A673 (cell line): ENCODE measurements at regions of chr15 and their contacts with region 1.

Region 1: DNA sequence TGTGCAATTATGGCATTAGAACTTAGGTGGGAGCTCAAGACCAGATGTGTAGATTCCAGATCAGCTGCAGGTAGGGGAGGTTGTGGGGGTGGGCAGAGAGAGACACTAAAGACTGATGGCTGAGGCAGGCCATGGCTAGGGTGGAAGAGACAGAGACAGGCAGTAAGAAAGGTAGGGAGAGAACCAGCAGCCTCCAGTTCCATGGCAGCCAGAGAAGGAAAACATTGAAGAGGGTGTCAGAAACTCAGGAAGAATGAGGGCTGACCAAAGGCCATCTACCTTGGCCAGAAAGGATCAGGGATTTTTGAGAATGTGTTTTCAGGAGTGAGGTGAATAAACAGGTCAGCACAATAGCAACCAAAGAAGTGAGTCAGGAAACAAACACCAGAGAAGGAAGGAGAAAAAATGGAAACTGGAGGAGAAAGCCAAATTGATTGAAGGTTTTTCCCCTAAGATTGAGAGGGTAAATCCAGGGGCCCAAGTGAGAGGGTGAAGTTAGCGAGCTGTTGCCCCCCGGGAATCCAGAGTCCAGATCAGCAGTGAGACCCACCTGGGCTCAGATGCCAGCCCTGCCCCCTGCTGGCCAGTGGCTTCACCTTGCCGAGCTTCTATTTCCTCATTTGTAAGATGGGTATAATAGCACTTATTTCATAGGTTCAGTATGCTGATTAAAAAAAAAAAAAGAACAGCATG is 41.0 kb downstream of the ABHD2 start:
- DNase-seq: peak; percentile 43
- H3K4me3 ChIP-seq: no peak overlapping the region
- H3K27ac ChIP-seq: no peak overlapping the region
- H3K4me1 ChIP-seq: no peaks in the 10 kb centered on the region
- H3K27me3 ChIP-seq: no peaks in the 10 kb centered on the region
- CTCF ChIP-seq: peak; percentile 82

Region 2: DNA sequence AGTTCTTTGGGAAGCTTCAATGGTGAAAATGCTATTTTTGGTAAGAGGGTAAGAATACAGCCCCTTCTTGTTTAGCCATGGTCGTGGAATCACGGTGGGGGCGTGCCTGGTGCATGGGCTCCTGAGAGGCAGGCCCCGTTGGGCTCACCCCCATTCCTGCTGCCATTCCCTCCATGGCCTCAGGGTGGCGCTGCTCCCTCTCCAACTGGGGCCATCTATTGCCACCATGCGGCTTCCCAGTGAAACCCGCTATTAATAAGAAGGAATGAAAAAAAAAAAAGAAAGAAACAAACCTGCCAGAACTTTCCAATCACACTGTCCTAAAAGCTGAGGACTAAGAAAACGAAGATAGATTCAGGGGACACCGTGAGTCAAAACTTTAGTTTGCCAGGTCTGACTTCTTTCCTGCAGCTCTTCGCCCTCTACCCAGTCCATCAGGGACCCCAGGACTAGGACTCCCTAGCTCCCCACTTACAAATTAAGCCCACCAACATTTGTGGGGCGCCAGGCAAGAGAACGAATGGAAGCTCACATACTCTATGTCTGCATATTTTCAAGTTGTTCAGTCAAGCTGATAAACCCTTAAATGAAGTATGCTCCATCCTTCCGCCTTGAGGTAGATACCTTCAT is 71.7 kb before region 1 on chr15:
- CTCF ChIA-PET with region 1: interaction called, 7 read pairs
- POLR2A ChIA-PET with region 1: no interaction called
- intact Hi-C with region 1: loop called (anchors 2 kb)
- DNase-seq: peak; percentile 86
- H3K4me3 ChIP-seq: no peak overlapping the region
- H3K27ac ChIP-seq: no peak overlapping the region
- H3K4me1 ChIP-seq: no peaks in the 10 kb centered on the region
- H3K27me3 ChIP-seq: no peaks in the 10 kb centered on the region
- CTCF ChIP-seq: peak; percentile 99

Region 3: DNA sequence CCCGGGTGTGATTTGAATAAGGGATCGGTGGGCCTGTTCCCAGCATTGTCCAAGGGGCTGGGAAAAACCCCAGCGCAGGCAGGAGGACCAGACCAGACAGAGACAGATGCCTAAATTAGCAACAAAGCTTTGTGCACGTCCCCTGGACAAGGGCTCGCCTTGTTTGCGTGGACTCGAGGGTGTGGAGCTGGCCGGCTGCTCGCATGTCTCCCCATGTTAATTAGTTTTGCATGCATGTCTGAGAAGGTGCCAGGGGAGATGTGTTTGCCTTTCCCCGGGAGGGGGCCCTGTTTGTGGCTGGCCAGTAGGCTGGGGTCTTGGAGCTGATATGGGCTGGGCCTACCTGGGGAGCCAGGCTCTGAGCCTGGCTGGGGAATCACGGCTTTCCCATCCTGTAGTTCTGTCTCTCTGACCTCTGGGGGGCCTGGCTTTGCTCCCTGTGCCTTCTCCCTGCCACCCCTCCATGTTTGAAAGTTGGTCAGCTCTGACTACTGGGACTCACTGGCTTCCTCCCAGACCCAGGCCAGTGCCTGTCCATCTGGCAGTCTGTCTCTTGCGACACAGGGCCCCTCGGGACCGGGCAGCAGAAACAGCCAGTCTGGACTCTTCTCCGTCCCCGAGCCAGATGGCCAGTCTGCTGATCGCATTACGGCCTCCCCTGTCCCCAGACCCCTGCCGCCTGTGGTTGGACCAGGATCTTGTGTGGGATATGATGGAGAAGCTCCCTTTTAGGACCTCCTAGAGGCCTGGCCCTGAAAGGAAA is 260.8 kb after region 1 on chr15:
- CTCF ChIA-PET with region 1: interaction called, 11 read pairs
- POLR2A ChIA-PET with region 1: no interaction called
- intact Hi-C with region 1: no loop called
- DNase-seq: no peak
- H3K4me3 ChIP-seq: no peak overlapping the region
- H3K27ac ChIP-seq: no peak overlapping the region
- H3K4me1 ChIP-seq: no peaks in the 10 kb centered on the region
- H3K27me3 ChIP-seq: no peaks in the 10 kb centered on the region
- CTCF ChIP-seq: no peak